ENCODE measurements at regions of chr18 and their contacts with region 1.

Region 1: DNA sequence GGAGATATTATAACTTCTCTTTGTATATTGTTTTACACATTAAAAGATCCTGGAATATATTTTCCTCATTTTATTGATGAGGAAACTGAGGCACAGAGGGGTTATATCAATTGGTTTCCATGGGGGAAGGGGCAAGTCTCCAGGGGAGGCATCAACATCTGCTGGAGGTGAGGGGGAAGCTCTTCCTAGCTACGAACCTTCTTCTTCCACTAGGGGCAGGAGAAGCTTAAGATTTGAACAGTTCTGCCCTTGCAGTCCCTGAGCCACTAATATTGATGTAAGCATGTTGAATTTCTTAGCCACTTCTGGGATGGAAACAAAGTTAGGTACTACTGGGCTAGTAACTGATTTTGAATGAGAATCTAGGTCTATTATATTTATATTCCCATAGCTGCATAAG is 140.1 kb upstream of the AQP4 start:
- H3K4me3 ChIP-seq: no peak overlapping the region
- H3K27ac ChIP-seq: no peak overlapping the region
- H3K4me1 ChIP-seq: no peaks in the 10 kb centered on the region
- CTCF ChIP-seq: no peak

Region 2: GRCh38 chr18:26804519-26804918 is 201.1 kb before region 1 on chr18:
- CTCF ChIA-PET with region 1: interaction called, 15 read pairs
- POLR2A ChIA-PET with region 1: no interaction called
- H3K4me3 ChIP-seq: no peak overlapping the region
- H3K27ac ChIP-seq: no peak overlapping the region
- H3K4me1 ChIP-seq: no peaks in the 10 kb centered on the region
- CTCF ChIP-seq: no peak

Region 3: DNA sequence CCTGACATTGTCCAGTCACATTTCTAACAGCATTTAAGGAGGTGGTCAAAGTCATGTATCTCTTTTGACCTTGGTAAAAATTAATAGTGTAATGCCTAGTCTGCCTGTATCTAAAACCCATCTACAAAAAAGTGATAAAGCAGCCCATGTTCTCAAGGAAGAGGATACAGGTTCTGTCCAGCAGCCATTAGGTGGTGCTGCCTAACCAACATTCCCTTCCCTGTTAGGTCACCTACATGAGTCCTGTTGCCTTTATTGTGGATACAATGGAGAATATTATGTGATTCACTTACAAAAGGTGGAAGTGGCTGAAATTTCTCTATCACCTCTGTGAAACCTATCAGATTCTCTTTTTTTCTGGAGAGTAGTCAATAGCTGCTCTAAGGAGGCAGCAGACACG is 192.5 kb before region 1 on chr18:
- CTCF ChIA-PET with region 1: interaction called, 12 read pairs
- POLR2A ChIA-PET with region 1: no interaction called
- H3K4me3 ChIP-seq: no peak overlapping the region
- H3K27ac ChIP-seq: no peak overlapping the region
- H3K4me1 ChIP-seq: no peaks in the 10 kb centered on the region
- CTCF ChIP-seq: peak; percentile 73; the same call in 1 of the 2 replicates